PC-9 (cell line): ENCODE measurements at regions of chr13 and their contacts with region 1.

Region 1: GRCh38 chr13:95676762-95677563 is at the start of gene DNAJC3:
- DNase-seq: peak; percentile 92 to 98
- H3K4me3 ChIP-seq: peak within 1 kb of the TSS; percentile 84
- H3K27ac ChIP-seq: peak within 1 kb of the TSS; percentile 92
- H3K4me1 ChIP-seq: peaks cover 33% of the 10 kb centered on the region
- H3K27me3 ChIP-seq: no peaks in the 10 kb centered on the region
- CTCF ChIP-seq: no peak
- total RNA-seq, gene DNAJC3: 8.1 and 10.5 TPM in 2 replicates

Region 2: DNA sequence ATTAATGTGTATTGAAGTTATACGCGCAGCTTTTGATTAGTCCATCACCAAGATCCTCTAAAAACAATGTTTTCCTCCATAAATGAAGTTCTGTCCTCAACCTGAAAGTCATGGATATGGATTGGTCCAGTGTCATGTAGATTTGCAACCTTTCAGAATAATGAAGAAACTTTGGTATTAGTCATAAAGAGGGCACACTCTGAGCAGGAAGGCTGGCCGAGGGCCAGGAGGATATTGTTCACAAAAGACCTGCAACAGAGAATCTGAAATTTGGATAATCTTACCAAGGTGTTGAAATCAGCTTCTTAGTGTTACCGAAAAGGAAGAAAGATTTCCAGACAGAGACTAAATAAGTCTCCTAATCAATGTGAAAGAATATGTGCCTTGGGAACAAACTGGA is 103.7 kb before region 1 on chr13:
- CTCF ChIA-PET with region 1: interaction called, 10 read pairs
- POLR2A ChIA-PET with region 1: no interaction called
- intact Hi-C with region 1: no loop called
- DNase-seq: peak; percentile 14 to 77
- H3K4me3 ChIP-seq: no peak overlapping the region
- H3K27ac ChIP-seq: peak overlapping the region; percentile 61
- H3K4me1 ChIP-seq: peaks cover 14% of the 10 kb centered on the region
- H3K27me3 ChIP-seq: no peaks in the 10 kb centered on the region
- CTCF ChIP-seq: no peak

Region 3: GRCh38 chr13:95861296-95861695 is 184.3 kb after region 1 on chr13:
- CTCF ChIA-PET with region 1: no interaction called
- POLR2A ChIA-PET with region 1: no interaction called
- intact Hi-C with region 1: no loop called
- DNase-seq: no peak
- H3K4me3 ChIP-seq: no peak overlapping the region
- H3K27ac ChIP-seq: no peak overlapping the region
- H3K4me1 ChIP-seq: no peaks in the 10 kb centered on the region
- H3K27me3 ChIP-seq: no peaks in the 10 kb centered on the region
- CTCF ChIP-seq: no peak